Left ventricle myocardium inferior (tissue), 1 donor: ENCODE measurements at regions of chr17 and their contacts with region 1.

Region 1: DNA sequence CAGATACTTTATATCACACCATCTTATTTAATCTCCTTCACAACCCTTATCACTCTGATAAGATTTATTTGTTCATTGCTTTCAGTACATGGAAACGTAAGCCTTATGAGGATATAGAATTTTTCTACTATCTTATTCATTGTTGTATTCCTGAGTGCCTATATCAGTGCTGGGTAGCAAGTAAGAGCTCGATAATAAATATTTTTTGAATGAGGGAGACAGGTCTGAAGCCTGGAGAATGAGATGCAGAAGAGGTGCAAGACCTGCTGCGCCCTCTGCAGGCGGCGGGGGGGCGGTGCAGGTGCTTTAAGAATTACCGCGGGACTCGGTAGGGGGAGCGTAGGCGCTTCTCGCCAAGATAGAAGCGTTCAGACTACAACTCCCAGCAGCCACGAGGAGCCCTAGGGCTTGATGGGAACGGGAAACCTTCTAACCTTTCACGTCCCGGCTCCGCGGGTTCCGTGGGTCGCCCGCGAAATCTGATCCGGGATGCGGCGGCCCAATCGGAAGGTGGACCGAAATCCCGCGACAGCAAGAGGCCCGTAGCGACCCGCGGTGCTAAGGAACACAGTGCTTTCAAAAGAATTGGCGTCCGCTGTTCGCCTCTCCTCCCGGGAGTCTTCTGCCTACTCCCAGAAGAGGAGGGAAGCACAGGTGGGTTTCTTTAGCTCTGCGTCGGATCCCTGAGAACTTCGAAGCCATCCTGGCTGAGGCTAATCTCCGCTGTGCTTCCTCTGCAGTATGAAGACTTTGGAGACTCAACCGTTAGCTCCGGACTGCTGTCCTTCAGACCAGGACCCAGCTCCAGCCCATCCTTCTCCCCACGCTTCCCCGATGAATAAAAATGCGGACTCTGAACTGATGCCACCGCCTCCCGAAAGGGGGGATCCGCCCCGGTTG is at the start of gene WRAP53:
- DNase-seq: peak; percentile 96
- H3K4me3 ChIP-seq: peak within 1 kb of the TSS; percentile 95
- H3K27ac ChIP-seq: peak within 1 kb of the TSS; percentile 99
- H3K4me1 ChIP-seq: peaks cover 53% of the 10 kb centered on the region
- H3K27me3 ChIP-seq: no peaks in the 10 kb centered on the region
- CTCF ChIP-seq: peak; percentile 100
- total RNA-seq, gene WRAP53: 4.7 TPM

Region 2: DNA sequence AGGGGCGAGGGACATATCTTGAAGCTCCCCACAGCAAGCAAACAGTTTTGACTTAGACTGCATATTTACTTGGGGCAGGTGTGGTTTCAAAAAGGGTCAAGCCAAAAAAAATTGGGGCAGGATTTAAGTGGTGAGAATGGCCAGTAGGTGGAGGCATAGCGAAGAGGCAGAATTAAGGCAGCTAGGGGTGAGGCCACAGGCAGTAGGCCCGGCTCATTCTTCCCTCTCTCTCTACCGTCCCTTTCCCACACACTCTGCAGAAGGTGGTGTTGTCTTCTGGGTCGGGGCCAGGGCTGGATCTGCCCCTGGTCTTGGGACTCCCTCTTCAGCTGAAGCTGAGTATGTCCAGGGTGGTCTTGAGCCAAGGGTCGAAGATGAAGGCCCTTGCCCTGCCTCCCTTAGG is 55.7 kb before region 1 on chr17:
- intact Hi-C with region 1: loop called (anchors 5 kb)
- DNase-seq: no peak
- H3K4me3 ChIP-seq: no peak overlapping the region
- H3K27ac ChIP-seq: no peak overlapping the region
- H3K4me1 ChIP-seq: peaks cover 15% of the 10 kb centered on the region
- H3K27me3 ChIP-seq: no peaks in the 10 kb centered on the region
- CTCF ChIP-seq: peak; percentile 56